H1 (cell line): ENCODE measurements at regions of chr15 and their contacts with region 1.

Region 1: DNA sequence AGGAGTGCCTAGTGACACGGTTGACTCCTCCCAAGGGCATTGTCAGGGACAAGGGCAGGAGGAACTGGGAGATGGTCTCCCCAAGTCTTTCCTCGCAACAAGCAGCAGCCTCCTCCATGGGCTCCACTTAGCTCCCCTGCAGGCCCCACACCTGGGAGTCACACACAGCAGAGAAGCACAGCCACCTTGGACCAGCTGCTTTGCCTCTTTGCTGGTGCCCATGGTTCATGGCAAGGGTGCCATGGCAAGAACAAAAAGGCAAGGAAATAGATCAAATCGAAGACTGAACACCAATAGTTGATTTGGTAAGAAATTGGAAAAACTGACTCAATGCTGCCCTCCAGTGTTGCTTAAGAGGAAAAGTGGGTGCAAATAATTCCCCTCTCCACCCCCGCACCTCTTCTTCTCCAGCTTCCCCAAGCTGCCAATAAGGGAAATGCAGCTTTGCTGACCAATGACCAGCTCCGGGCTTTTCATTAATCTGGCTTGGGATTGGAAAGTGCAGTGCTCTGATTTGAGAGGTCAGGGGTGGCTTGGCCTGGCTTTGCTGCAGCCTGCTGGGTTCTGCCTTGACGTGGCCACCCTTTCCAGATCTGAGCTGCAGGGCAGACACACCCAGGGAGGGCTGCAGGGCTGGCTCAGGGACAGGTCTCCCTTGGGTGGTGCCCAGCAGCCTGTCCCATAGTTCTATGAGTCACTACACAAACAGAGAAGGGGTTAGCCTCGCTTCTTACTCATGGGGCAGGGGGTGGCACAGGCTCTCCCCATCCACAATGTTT is 162.0 kb downstream of the KLF13 start:
- DNase-seq: peak; percentile 58 to 66
- H3K4me3 ChIP-seq: no peak overlapping the region
- H3K27ac ChIP-seq: no peak overlapping the region
- H3K4me1 ChIP-seq: peaks cover 0 to 6% (median under 1%) of the 10 kb centered on the region in 4 experiments; a peak in 5 of 7 replicates
- H3K27me3 ChIP-seq: peaks cover 14 to 16% (median 15%) of the 10 kb centered on the region in 4 experiments
- CTCF ChIP-seq: peak; percentile 56 to 99 (median 93)
- EP300 ChIP-seq: no peak; a peak in 1 of 3 replicates
- POLR2A ChIP-seq: no peak
- RAD21 ChIP-seq: peak; percentile 81 to 85

Region 2: GRCh38 chr15:31200735-31201151 is 287.9 kb before region 1 on chr15:
- CTCF ChIA-PET with region 1: interaction called, 32 read pairs
- POLR2A ChIA-PET with region 1: no interaction called
- DNase-seq: peak in 1 of 2 experiments; percentile 76
- H3K4me3 ChIP-seq: no peak overlapping the region
- H3K27ac ChIP-seq: no peak overlapping the region
- H3K4me1 ChIP-seq: peaks cover 0 to 2% (median 0%) of the 10 kb centered on the region in 4 experiments; a peak in 1 of 7 replicates
- H3K27me3 ChIP-seq: no peaks in the 10 kb centered on the region
- CTCF ChIP-seq: peak; percentile 66 to 72 (median 68)
- EP300 ChIP-seq: no peak
- POLR2A ChIP-seq: no peak
- RAD21 ChIP-seq: peak; percentile 80 to 84

Region 3: GRCh38 chr15:31215490-31216214 is 273.0 kb before region 1 on chr15:
- CTCF ChIA-PET with region 1: interaction called, 52 read pairs
- POLR2A ChIA-PET with region 1: no interaction called
- DNase-seq: peak in 1 of 2 experiments; percentile 91
- H3K4me3 ChIP-seq: peak overlapping the region; percentile 43 to 69 (median 44)
- H3K27ac ChIP-seq: no peak overlapping the region
- H3K4me1 ChIP-seq: peaks cover 0 to 11% (median 4%) of the 10 kb centered on the region in 4 experiments; a peak in 5 of 7 replicates
- H3K27me3 ChIP-seq: no peaks in the 10 kb centered on the region; a peak in 2 of 7 replicates
- CTCF ChIP-seq: peak; percentile 76 to 86 (median 86)
- EP300 ChIP-seq: no peak
- POLR2A ChIP-seq: no peak; a peak in 1 of 3 replicates
- RAD21 ChIP-seq: peak; percentile 72 to 81

Region 4: DNA sequence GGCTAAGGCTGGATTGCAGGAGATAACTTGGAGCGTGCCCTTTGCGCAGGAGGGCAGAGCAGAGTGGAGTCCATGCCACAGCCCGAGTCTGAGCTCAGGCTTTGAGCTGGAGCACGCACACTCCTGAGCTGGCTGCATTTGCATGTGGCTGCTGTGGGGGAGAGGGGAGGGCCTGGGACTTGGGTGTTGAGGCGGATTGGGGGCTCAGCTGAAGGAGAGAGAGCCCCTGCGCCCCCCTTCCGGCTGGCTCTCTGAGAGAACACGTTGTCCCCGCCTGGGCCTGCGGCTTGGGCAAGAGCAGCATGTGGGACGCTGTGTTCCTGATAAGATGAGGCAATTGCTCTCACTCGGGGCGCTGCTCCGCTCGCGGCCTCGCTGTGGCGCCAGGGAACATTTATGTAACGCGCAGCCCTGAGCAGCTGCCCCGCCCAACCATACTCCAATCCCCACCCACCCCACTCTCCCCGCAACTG is 122.9 kb before region 1 on chr15:
- CTCF ChIA-PET with region 1: interaction called, 10 read pairs
- POLR2A ChIA-PET with region 1: no interaction called
- DNase-seq: peak; percentile 44 to 78
- H3K4me3 ChIP-seq: peak overlapping the region in 1 of 4 experiments; percentile 32; a peak in 1 of 8 replicates
- H3K27ac ChIP-seq: no peak overlapping the region
- H3K4me1 ChIP-seq: peaks cover 8 to 53% (median 45%) of the 10 kb centered on the region in 4 experiments
- H3K27me3 ChIP-seq: no peaks in the 10 kb centered on the region
- CTCF ChIP-seq: peak; percentile 37 to 48 (median 44)
- EP300 ChIP-seq: no peak
- POLR2A ChIP-seq: no peak
- RAD21 ChIP-seq: peak; percentile 13 to 50; a peak in 3 of 4 replicates

Region 5: DNA sequence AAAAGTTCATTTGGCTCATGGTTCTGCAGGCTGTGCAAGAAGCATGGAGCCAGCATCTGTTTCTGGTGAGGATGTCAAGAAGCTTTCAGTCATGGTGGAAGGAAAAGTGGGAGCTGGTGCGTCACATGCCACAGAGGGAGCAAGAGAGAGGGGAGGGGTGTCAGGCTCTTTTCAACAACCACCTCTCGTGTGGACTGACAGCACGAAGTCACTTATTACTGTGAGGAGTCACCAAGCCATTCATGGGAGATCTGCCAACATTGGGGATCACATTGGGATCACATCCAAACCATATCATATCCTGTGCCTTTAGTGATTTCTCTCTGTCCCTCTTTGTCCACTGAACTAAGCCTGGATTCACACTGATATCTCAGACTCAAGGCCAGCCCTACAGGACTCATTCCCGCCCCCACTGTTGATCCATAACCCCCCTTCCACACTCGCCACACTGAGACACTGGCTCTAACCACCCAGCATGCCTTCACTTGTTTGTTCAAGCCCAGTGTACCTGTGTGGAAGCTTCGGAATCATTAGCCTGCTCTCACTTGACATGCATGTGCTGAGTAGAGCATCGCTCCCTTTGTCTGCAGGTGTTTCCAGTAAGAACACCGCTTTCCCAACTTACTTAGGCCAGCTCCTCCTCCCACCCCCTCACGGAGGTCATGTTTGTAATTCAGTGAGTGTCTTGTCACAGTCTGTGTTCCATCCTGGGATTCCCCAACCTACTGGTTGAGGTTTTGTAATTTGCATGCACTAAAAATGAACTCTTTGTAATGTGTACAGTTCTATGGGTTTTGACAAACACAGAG is 29.8 kb before region 1 on chr15:
- CTCF ChIA-PET with region 1: interaction called, 45 read pairs
- POLR2A ChIA-PET with region 1: no interaction called
- DNase-seq: no peak
- H3K4me3 ChIP-seq: no peak overlapping the region
- H3K27ac ChIP-seq: no peak overlapping the region
- H3K4me1 ChIP-seq: peaks cover 0 to 6% (median 0%) of the 10 kb centered on the region in 4 experiments; a peak in 4 of 7 replicates
- H3K27me3 ChIP-seq: no peaks in the 10 kb centered on the region
- CTCF ChIP-seq: no peak
- EP300 ChIP-seq: no peak
- POLR2A ChIP-seq: no peak
- RAD21 ChIP-seq: no peak

Region 6: GRCh38 chr15:31472636-31473384 is 15.8 kb before region 1 on chr15:
- CTCF ChIA-PET with region 1: interaction called, 105 read pairs
- POLR2A ChIA-PET with region 1: no interaction called
- DNase-seq: no peak
- H3K4me3 ChIP-seq: no peak overlapping the region
- H3K27ac ChIP-seq: no peak overlapping the region
- H3K4me1 ChIP-seq: peaks cover 0 to 5% (median 0%) of the 10 kb centered on the region in 4 experiments; a peak in 1 of 7 replicates
- H3K27me3 ChIP-seq: no peaks in the 10 kb centered on the region; a peak in 1 of 7 replicates
- CTCF ChIP-seq: no peak
- EP300 ChIP-seq: no peak
- POLR2A ChIP-seq: no peak
- RAD21 ChIP-seq: no peak